ENCODE measurements at regions of chr13 and their contacts with region 1.

Region 1: GRCh38 chr13:76903544-76904162 is 17.4 kb upstream of the KCTD12 start:
- DNase-seq: peak; percentile 79
- H3K4me3 Mint-ChIP-seq: no peak overlapping the region
- H3K27ac Mint-ChIP-seq: no peak overlapping the region
- H3K4me1 Mint-ChIP-seq: peaks cover 9% of the 10 kb centered on the region
- H3K27me3 Mint-ChIP-seq: no peaks in the 10 kb centered on the region
- CTCF ChIP-seq: peak; percentile 98

Region 2: DNA sequence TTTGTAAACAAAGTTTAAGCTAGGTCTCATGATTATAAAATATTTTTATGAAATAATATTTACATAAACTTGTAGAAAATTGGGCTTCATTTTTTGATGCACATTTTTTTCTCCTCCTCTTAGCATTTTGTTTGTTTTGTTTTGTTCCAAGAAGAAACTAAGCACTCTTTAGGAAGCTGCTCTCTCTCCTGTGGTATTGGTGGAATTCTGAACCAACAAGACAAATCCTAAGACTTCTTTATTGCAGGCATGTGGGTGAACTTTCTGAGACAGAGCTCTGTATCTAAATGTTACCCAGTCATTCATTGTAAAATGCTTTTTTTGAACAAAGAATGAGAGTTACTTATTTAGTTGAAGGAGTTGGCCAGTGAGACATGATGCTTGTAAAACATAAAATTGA is 1228.2 kb before region 1 on chr13:
- CTCF ChIA-PET with region 1: no interaction called
- POLR2A ChIA-PET with region 1: no interaction called
- intact Hi-C with region 1: loop called (anchors 2 kb)
- DNase-seq: peak; percentile 20
- H3K4me3 Mint-ChIP-seq: peak overlapping the region; percentile 79
- H3K27ac Mint-ChIP-seq: peak overlapping the region; percentile 93
- H3K4me1 Mint-ChIP-seq: peaks cover 8% of the 10 kb centered on the region
- H3K27me3 Mint-ChIP-seq: no peaks in the 10 kb centered on the region
- CTCF ChIP-seq: no peak

Region 3: GRCh38 chr13:76016799-76017400 is 886.8 kb before region 1 on chr13:
- CTCF ChIA-PET with region 1: no interaction called
- POLR2A ChIA-PET with region 1: no interaction called
- intact Hi-C with region 1: loop called (anchors 5 kb)
- DNase-seq: peak; percentile 62
- H3K4me3 Mint-ChIP-seq: no peak overlapping the region
- H3K27ac Mint-ChIP-seq: no peak overlapping the region
- H3K4me1 Mint-ChIP-seq: no peaks in the 10 kb centered on the region
- H3K27me3 Mint-ChIP-seq: no peaks in the 10 kb centered on the region
- CTCF ChIP-seq: peak; percentile 53

Region 4: GRCh38 chr13:76473552-76474134 is 430.0 kb before region 1 on chr13:
- CTCF ChIA-PET with region 1: interaction called, 4 read pairs
- POLR2A ChIA-PET with region 1: no interaction called
- intact Hi-C with region 1: loop called (anchors 1 kb)
- DNase-seq: peak; percentile 86
- H3K4me3 Mint-ChIP-seq: no peak overlapping the region
- H3K27ac Mint-ChIP-seq: no peak overlapping the region
- H3K4me1 Mint-ChIP-seq: no peaks in the 10 kb centered on the region
- H3K27me3 Mint-ChIP-seq: no peaks in the 10 kb centered on the region
- CTCF ChIP-seq: peak; percentile 87

Region 5: DNA sequence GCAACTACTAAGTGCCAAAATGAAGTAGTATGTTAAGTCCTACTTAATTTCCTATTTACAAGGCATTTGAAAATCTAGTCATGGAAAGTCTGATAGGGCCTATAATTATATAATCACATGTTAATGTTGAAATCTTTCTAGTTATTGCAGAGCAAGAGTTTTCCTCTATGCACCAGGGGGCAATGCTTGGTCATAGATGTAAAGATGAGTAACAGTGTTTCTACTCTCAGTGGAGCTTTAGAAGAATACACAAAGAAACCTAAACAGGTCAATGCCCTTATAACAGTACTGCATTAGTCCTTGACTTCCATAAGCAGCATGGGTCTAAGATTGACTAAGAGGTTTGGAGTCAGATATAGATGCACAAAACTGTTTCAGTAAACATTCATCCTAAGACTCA is 236.1 kb before region 1 on chr13:
- CTCF ChIA-PET with region 1: interaction called, 17 read pairs
- POLR2A ChIA-PET with region 1: interaction called, 3 read pairs
- intact Hi-C with region 1: loop called (anchors 1 kb)
- DNase-seq: peak; percentile 59
- H3K4me3 Mint-ChIP-seq: no peak overlapping the region
- H3K27ac Mint-ChIP-seq: no peak overlapping the region
- H3K4me1 Mint-ChIP-seq: peaks cover 20% of the 10 kb centered on the region
- H3K27me3 Mint-ChIP-seq: no peaks in the 10 kb centered on the region
- CTCF ChIP-seq: peak; percentile 26

Region 6: GRCh38 chr13:76822698-76823267 is 80.9 kb before region 1 on chr13:
- CTCF ChIA-PET with region 1: interaction called, 13 read pairs
- POLR2A ChIA-PET with region 1: interaction called, 4 read pairs
- intact Hi-C with region 1: loop called (anchors 1 kb)
- DNase-seq: peak; percentile 51
- H3K4me3 Mint-ChIP-seq: no peak overlapping the region
- H3K27ac Mint-ChIP-seq: no peak overlapping the region
- H3K4me1 Mint-ChIP-seq: no peaks in the 10 kb centered on the region
- H3K27me3 Mint-ChIP-seq: peaks cover 12% of the 10 kb centered on the region
- CTCF ChIP-seq: peak; percentile 37

Region 7: DNA sequence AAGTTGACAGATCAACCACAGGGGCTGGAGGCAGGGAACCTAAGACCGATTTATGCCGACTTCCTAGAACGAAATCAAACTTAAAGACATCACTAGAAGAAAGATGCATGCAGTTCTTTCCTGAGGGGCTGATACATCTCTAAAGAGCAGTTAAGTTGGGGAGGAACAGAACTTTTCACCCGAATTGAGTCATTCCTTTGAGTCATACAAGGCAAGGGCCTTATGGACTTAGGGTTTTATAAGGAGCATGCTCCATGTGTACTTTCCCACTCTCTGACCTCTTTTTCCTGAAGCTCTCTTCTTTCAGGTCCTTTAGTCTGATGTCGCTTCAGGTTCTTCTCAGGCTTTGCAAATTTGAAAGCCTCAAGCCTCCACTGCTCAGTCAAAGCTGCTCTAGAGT is 131.2 kb after region 1 on chr13:
- CTCF ChIA-PET with region 1: no interaction called
- POLR2A ChIA-PET with region 1: no interaction called
- intact Hi-C with region 1: no loop called
- DNase-seq: peak; percentile 13
- H3K4me3 Mint-ChIP-seq: no peak overlapping the region
- H3K27ac Mint-ChIP-seq: no peak overlapping the region
- H3K4me1 Mint-ChIP-seq: no peaks in the 10 kb centered on the region
- H3K27me3 Mint-ChIP-seq: no peaks in the 10 kb centered on the region
- CTCF ChIP-seq: no peak